ENCODE measurements at regions of chr6 and their contacts with region 1.

Region 1: GRCh38 chr6:30877419-30878371 is 6.6 kb upstream of the DDR1 start:
- DNase-seq: peak; percentile 95
- ATAC-seq: peak; percentile 93

Region 2: GRCh38 chr6:30600451-30600961 is 277.2 kb before region 1 on chr6:
- intact Hi-C with region 1: no loop called
- DNase-seq: no peak
- ATAC-seq: no peak

Region 3: DNA sequence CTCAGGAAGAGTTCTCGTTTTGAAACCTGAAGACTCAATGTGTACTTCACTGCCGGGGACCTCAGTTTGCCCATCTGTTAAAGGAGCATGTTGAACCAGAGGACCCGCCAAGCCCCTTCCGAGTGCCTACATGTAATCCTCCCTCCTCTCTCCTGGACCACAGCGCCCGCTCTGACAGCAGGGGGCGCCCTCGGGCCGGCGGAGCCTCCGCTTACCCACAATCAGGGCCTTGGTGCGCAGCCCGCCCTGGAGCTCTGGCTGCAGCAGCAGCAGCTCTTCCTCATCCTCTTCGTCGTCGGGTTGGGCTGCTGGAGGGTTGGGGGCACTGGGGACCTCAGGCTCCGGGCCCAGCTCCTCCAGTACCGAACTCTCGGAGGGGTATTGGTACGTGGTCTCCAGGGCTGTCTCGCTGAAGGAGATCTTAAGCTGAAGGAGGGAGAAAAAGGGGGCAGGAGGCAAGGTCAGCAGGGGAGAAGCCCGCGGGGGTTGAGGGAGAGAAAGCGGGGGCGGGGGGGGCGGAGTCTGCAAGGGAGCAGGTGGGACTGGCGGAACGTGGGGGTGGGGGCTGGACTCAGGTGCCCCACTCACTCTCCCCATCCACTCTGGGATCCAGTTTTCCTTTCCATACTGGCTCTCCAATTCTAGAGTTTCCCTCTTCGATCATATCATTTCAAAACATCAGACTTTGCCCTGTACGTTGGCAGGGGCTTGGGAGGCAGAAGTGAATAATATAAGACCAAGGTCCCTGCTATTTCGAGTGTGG is 198.6 kb before region 1 on chr6:
- intact Hi-C with region 1: loop called (anchors 5 kb)
- DNase-seq: peak; percentile 96
- ATAC-seq: peak; percentile 82

Region 4: DNA sequence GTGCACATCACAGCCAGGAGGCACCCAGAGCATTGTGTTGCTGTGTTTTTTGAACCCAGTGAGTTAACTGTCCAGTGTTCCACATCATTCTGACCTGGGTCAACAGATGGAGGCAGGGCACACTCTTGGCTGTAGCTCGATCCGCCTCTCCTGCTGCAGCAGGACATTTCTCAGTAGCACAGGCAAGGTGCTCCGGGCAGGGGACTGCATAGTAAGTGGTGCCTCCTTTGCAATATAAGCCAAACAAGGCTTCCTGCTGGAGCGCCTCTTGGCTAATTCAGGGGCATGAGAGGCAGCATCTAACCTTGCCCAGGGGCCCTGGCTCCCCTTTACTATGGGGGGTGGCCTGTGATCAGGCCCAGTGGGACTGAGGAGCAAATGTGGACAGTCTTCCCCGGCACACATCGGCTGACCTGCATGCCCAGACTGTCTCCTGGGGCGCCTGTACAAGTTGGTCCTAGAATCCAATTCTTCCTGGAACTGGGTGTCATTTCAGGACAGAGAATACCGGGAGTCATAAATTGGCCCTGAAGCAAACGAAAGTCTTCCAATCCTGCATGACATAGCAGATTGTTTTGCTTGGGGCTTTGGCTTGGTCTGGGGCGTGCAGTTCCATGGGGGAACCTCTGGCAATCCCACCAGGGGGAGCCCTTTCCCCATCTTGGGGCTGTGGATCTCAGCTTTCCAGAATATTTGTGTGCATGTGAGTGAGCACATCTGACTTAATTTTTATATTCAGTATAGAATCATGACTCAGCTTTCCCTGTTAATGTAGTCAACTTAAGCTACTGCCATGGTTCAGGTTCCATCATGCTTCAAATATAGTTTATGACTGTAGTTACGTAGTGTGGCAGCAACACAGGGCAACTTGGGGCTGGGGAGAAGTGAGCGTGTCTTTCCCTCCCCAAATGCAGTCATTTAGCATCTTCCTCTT is 49.4 kb before region 1 on chr6:
- intact Hi-C with region 1: loop called (anchors 1 kb)
- DNase-seq: peak; percentile 91
- ATAC-seq: peak; percentile 96

Region 5: DNA sequence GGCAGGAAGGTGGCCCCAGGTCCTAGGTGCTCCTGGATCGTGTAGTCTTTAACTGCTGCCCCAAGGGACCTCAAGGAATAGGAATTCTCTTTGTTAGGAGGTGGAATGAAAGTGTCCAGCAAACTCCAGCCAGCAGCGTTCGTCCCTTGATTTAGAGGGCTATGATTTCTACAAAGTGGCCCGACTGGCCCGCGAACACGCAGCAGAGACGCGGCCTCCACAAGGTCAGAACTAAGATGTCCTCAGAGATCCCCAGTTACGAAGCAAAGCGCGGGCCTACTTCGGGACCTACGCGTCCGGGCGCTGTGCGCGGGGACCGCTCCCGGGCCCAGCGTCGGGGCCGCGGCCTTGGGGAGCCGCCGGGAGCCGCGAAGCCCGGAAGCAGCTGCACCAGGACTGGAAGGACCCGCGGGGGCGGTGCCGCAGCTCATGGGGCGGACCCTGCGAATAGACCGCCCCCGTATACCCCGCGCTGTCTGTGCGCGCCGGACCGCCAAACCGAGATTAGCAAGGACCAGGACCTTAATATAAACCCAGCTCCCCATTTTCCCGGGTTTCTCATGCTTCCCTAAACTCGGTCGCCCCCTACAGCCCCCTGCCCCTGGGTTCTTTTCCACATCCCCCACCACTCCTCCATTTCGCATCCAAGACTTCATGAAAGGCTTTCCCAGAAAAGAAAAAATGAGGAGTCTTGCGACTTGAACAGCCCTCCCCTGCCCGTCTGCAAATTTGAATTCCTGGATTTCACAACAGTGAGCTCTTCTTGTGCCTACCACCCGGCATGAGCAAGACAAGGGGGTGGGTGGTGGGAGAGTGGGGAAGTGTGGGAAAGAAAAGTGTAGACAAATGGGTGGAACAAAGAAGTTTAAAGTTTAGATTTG is 782.9 kb after region 1 on chr6 and contains the start of gene C6orf47:
- intact Hi-C with region 1: no loop called
- DNase-seq: peak; percentile 94
- ATAC-seq: peak; percentile 85
- total RNA-seq, gene C6orf47: 17.0 TPM